Aorta (tissue), 5 donors: ENCODE measurements at regions of chr15 and their contacts with region 1.

Region 1: GRCh38 chr15:101014921-101015841 is 96.0 kb downstream of the LRRK1 start:
- DNase-seq: peak; percentile 83 to 91
- ATAC-seq: peak; percentile 84
- H3K4me3 ChIP-seq: no peak overlapping the region
- H3K27ac ChIP-seq: no peak overlapping the region
- H3K4me1 ChIP-seq: no peaks in the 10 kb centered on the region
- H3K27me3 ChIP-seq: no peaks in the 10 kb centered on the region

Region 2: GRCh38 chr15:101088788-101089583 is 73.8 kb after region 1 on chr15:
- intact Hi-C with region 1: loop called (anchors 5 to 10 kb)
- DNase-seq: peak; percentile 86 to 95
- ATAC-seq: peak; percentile 90
- H3K4me3 ChIP-seq: no peak overlapping the region
- H3K27ac ChIP-seq: no peak overlapping the region
- H3K4me1 ChIP-seq: no peaks in the 10 kb centered on the region
- H3K27me3 ChIP-seq: no peaks in the 10 kb centered on the region

Region 3: DNA sequence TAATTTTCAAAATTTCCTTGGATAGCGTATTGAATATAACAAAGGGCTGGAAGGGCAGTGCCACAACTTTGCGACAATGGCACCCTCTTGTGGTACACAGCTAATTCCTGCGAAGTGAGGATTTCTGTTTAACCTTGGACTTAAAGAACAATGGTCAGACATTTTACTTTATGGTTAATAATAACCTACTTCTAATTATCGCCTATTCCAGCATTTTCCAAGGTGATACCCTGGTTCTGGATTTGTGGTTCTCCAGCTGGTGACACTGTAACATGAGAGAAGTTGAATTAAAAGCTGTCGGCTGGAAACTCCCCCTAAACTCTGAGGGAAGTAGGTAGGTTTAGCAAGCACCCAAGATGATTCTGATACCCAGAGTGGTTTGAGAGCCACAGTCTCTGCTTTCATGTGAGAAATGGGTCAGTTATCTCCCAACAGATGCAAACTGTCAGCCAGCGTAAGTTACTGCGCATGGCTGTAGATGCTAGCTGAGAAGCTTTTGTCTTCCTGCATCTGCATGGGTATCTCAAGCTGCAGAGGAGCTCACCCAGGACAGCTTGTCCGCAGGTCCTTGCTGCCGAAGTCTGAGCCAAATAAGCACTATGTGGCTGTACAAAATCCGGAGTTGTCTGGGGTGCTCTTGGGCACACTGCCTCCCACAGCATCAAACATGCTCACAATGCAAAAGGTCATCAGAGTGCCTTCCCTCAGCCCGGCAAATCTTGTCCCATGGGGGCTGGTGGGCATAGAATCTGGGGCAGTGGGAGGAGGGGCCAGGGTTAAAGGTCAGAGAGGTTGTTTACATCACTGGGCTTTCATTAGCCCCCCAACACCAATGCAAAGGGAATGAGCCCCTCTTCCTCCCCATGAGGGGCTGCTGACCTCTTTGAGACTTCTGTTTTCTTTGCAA is 243.3 kb after region 1 on chr15:
- intact Hi-C with region 1: loop called (anchors 1 to 2 kb)
- DNase-seq: peak; percentile 72 to 79
- ATAC-seq: peak; percentile 88
- H3K4me3 ChIP-seq: no peak overlapping the region
- H3K27ac ChIP-seq: no peak overlapping the region
- H3K4me1 ChIP-seq: no peaks in the 10 kb centered on the region
- H3K27me3 ChIP-seq: no peaks in the 10 kb centered on the region